GM12878 (cell line): ENCODE measurements at regions of chr2 and their contacts with region 1.

Region 1: DNA sequence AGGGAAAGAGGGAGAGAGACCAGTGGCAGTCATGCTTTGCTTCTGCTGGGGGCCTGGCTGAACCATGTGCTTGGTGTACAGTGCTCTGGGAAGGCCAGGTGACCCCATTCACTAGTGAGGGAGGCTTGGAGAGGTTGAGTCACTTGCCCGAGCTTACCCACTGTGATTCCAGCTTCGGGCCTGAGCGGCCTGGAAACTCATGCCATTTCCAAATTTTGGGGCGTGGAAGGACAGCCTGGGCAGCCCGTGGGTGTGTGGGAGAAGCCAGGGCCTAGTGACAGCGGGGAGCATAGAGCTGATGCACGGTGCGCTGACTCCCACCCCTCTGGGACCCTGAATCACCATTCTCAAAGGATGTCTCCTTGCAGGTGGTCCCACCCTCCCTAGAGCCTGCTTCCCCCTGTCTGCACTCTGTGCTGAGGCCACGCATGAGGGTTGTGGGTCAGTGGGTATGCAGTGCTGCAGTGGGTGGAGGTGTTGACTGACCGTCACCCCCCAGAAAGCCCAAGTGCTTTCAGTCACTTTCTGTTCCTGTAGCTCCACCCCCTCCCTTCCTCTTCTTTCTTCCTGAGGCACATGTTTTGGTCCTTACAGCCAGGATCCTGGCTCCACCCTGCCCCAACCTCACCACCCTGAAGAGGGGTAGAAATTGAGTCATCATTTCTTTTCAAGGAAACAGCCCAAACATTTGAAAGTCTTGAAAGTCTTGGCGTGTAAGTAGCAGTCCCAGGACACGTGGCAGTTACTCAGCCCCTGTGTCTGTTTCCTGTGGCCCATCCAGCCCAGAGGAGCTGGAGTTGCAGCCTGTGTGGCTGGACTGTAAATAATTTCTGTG is 69.3 kb upstream of the MCFD2 start:
- DNase-seq: peak; percentile 79
- ATAC-seq: peak; percentile 63
- H3K4me3 ChIP-seq: peak overlapping the region; percentile 37; the same call in 1 of the 2 replicates
- H3K27ac ChIP-seq: peak overlapping the region; percentile 89
- H3K4me1 ChIP-seq: peaks cover 58% of the 10 kb centered on the region
- H3K27me3 ChIP-seq: no peaks in the 10 kb centered on the region
- CTCF ChIP-seq: no peak
- EP300 ChIP-seq: peak; percentile 25 to 49; a peak in 2 of 4 replicates
- POLR2A ChIP-seq: peak; percentile 68
- RAD21 ChIP-seq: no peak

Region 2: GRCh38 chr2:46915811-46916630 is 68.8 kb before region 1 on chr2:
- CTCF ChIA-PET with region 1: no interaction called
- POLR2A ChIA-PET with region 1: interaction called, 9 read pairs
- RAD21 ChIA-PET with region 1: interaction called, 7 read pairs
- SMC1A ChIA-PET with region 1: interaction called, 3 read pairs
- in situ Hi-C with region 1: no loop called
- intact Hi-C with region 1: loop called (anchors 1 kb)
- DNase-seq: peak; percentile 40
- ATAC-seq: peak; percentile 87
- H3K4me3 ChIP-seq: peak overlapping the region; percentile 84
- H3K27ac ChIP-seq: peak overlapping the region; percentile 64
- H3K4me1 ChIP-seq: peaks cover 16% of the 10 kb centered on the region
- H3K27me3 ChIP-seq: no peaks in the 10 kb centered on the region
- CTCF ChIP-seq: no peak
- EP300 ChIP-seq: no peak
- POLR2A ChIP-seq: peak; percentile 82
- RAD21 ChIP-seq: no peak

Region 3: GRCh38 chr2:46942139-46942517 is 42.7 kb before region 1 on chr2:
- CTCF ChIA-PET with region 1: interaction called, 5 read pairs
- POLR2A ChIA-PET with region 1: no interaction called
- RAD21 ChIA-PET with region 1: no interaction called
- SMC1A ChIA-PET with region 1: no interaction called
- in situ Hi-C with region 1: no loop called
- intact Hi-C with region 1: loop called (anchors 1 kb)
- DNase-seq: no peak
- ATAC-seq: peak; percentile 71
- H3K4me3 ChIP-seq: peak overlapping the region; percentile 83
- H3K27ac ChIP-seq: peak overlapping the region; percentile 93
- H3K4me1 ChIP-seq: peaks cover 24% of the 10 kb centered on the region
- H3K27me3 ChIP-seq: no peaks in the 10 kb centered on the region
- CTCF ChIP-seq: no peak
- EP300 ChIP-seq: no peak
- POLR2A ChIP-seq: 0 out of 2 replicates have a peak, but pooled peaks have one; percentile 18
- RAD21 ChIP-seq: no peak

Region 4: GRCh38 chr2:46971929-46972328 is 12.9 kb before region 1 on chr2:
- CTCF ChIA-PET with region 1: interaction called, 4 read pairs
- POLR2A ChIA-PET with region 1: interaction called, 3 read pairs
- RAD21 ChIA-PET with region 1: interaction called, 6 read pairs
- SMC1A ChIA-PET with region 1: interaction called, 19 read pairs
- in situ Hi-C with region 1: no loop called
- intact Hi-C with region 1: no loop called
- DNase-seq: no peak
- ATAC-seq: no peak
- H3K4me3 ChIP-seq: no peak overlapping the region
- H3K27ac ChIP-seq: no peak overlapping the region
- H3K4me1 ChIP-seq: peaks cover 10% of the 10 kb centered on the region
- H3K27me3 ChIP-seq: no peaks in the 10 kb centered on the region
- CTCF ChIP-seq: no peak
- EP300 ChIP-seq: no peak
- POLR2A ChIP-seq: no peak
- RAD21 ChIP-seq: no peak

Region 5: GRCh38 chr2:47386551-47386950 is 401.7 kb after region 1 on chr2:
- CTCF ChIA-PET with region 1: interaction called, 3 read pairs
- POLR2A ChIA-PET with region 1: no interaction called
- RAD21 ChIA-PET with region 1: interaction called, 12 read pairs
- SMC1A ChIA-PET with region 1: interaction called, 3 read pairs
- in situ Hi-C with region 1: loop called (anchors 5 kb)
- intact Hi-C with region 1: no loop called
- DNase-seq: no peak
- ATAC-seq: peak; percentile 61
- H3K4me3 ChIP-seq: no peak overlapping the region
- H3K27ac ChIP-seq: no peak overlapping the region
- H3K4me1 ChIP-seq: peaks cover 3% of the 10 kb centered on the region; the same call in 1 of the 2 replicates
- H3K27me3 ChIP-seq: peaks cover 0 to 3% of the 10 kb centered on the region in 2 experiments; a peak in 1 of 4 replicates
- CTCF ChIP-seq: no peak
- EP300 ChIP-seq: no peak
- POLR2A ChIP-seq: no peak
- RAD21 ChIP-seq: no peak

Region 6: DNA sequence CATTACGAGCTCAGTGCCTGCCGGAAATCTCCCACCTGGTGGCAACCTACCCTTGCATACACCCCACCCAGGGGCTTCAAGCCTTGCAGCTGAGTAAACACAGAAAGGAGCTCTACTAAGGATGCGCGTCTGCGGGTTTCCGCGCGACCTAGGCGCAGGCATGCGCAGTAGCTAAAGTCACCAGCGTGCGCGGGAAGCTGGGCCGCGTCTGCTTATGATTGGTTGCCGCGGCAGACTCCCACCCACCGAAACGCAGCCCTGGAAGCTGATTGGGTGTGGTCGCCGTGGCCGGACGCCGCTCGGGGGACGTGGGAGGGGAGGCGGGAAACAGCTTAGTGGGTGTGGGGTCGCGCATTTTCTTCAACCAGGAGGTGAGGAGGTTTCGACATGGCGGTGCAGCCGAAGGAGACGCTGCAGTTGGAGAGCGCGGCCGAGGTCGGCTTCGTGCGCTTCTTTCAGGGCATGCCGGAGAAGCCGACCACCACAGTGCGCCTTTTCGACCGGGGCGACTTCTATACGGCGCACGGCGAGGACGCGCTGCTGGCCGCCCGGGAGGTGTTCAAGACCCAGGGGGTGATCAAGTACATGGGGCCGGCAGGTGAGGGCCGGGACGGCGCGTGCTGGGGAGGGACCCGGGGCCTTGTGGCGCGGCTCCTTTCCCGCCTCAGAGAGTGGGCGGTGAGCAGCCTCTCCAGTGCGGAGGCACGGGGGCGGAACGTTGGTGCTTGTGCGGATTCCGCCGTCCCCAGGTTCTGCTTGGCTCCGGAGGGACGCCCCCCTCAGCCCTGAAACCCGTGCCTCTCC is 418.1 kb after region 1 on chr2 and contains the start of gene MSH2:
- CTCF ChIA-PET with region 1: interaction called, 3 read pairs
- POLR2A ChIA-PET with region 1: interaction called, 6 read pairs
- RAD21 ChIA-PET with region 1: no interaction called
- SMC1A ChIA-PET with region 1: no interaction called
- in situ Hi-C with region 1: no loop called
- intact Hi-C with region 1: loop called (anchors 5 kb)
- DNase-seq: peak; percentile 86
- ATAC-seq: peak; percentile 97
- H3K4me3 ChIP-seq: peak within 1 kb of the TSS; percentile 83
- H3K27ac ChIP-seq: peak within 1 kb of the TSS; percentile 85
- H3K4me1 ChIP-seq: peaks cover 6% of the 10 kb centered on the region
- H3K27me3 ChIP-seq: no peaks in the 10 kb centered on the region; a peak in 1 of 4 replicates
- CTCF ChIP-seq: no peak
- EP300 ChIP-seq: 0 out of 4 replicates have a peak, but pooled peaks of 1 of the 2 experiments have one; percentile 17
- POLR2A ChIP-seq: peak; percentile 88
- RAD21 ChIP-seq: no peak
- polyA plus RNA-seq, gene MSH2: 24.3 to 31.3 TPM